Colonic mucosa (tissue), 4 donors: ENCODE measurements at regions of chr3 and their contacts with region 1.

Region 1: DNA sequence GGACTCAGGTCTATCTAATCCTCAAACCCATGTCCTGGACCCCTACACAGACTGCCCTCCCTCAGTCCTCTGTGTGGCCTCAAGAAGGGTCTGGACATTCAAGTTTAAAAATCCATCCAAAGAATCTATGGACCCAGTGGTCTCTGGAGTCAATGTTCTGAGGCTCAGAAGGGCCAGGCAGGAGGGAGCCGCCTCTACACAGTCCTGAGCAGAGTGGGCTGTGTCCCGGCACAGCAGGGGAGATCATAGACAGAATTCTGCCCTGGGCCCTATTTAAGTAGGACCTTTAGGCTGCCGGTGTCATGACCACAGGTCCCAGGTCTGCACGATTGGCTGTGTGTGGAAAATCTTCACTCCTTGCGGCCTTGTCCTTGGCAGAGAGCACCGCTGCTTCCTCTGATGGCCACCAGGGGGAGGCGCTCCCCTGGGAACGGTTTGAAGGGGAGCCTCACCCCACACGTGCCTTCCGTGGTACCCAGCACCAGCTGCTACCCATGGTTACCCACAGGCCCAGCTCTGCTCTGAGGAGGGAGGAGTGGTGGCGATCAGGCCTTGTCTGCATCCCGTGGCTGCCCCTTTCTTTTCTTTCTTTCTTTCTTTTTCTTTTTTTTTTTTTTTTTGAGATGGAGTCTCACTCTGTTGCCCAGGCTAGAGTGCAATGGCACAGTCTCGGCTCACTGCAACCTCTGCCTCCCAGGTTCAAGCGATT is 37.9 kb downstream of the CHRD start:
- DNase-seq: peak; percentile 79
- H3K4me3 ChIP-seq: no peak overlapping the region
- H3K27ac ChIP-seq: no peak overlapping the region
- H3K4me1 ChIP-seq: no peaks in the 10 kb centered on the region
- H3K27me3 ChIP-seq: no peaks in the 10 kb centered on the region
- CTCF ChIP-seq: peak; percentile 89

Region 2: GRCh38 chr3:183812761-183813445 is 604.9 kb before region 1 on chr3:
- intact Hi-C with region 1: no loop called
- DNase-seq: no peak
- H3K4me3 ChIP-seq: no peak overlapping the region
- H3K27ac ChIP-seq: no peak overlapping the region
- H3K4me1 ChIP-seq: no peaks in the 10 kb centered on the region
- H3K27me3 ChIP-seq: no peaks in the 10 kb centered on the region
- CTCF ChIP-seq: no peak

Region 3: GRCh38 chr3:184469423-184469822 is 51.6 kb after region 1 on chr3:
- intact Hi-C with region 1: loop called (anchors 5 kb)
- DNase-seq: peak; percentile 59
- H3K4me3 ChIP-seq: no peak overlapping the region
- H3K27ac ChIP-seq: no peak overlapping the region
- H3K4me1 ChIP-seq: no peaks in the 10 kb centered on the region
- H3K27me3 ChIP-seq: no peaks in the 10 kb centered on the region
- CTCF ChIP-seq: peak; percentile 45

Region 4: GRCh38 chr3:184513276-184514170 is 95.8 kb after region 1 on chr3:
- intact Hi-C with region 1: loop called (anchors 5 kb)
- DNase-seq: peak; percentile 89
- H3K4me3 ChIP-seq: peak overlapping the region; percentile 38
- H3K27ac ChIP-seq: no peak overlapping the region
- H3K4me1 ChIP-seq: no peaks in the 10 kb centered on the region
- H3K27me3 ChIP-seq: peaks cover 3% of the 10 kb centered on the region
- CTCF ChIP-seq: peak; percentile 72

Region 5: GRCh38 chr3:184543843-184544512 is 126.2 kb after region 1 on chr3:
- intact Hi-C with region 1: loop called (anchors 10 kb)
- DNase-seq: peak; percentile 88
- H3K4me3 ChIP-seq: no peak overlapping the region
- H3K27ac ChIP-seq: no peak overlapping the region
- H3K4me1 ChIP-seq: no peaks in the 10 kb centered on the region
- H3K27me3 ChIP-seq: no peaks in the 10 kb centered on the region
- CTCF ChIP-seq: peak; percentile 89

Region 6: GRCh38 chr3:185342458-185343174 is 924.8 kb after region 1 on chr3:
- intact Hi-C with region 1: no loop called
- DNase-seq: no peak
- H3K4me3 ChIP-seq: no peak overlapping the region
- H3K27ac ChIP-seq: no peak overlapping the region
- H3K4me1 ChIP-seq: no peaks in the 10 kb centered on the region
- H3K27me3 ChIP-seq: no peaks in the 10 kb centered on the region
- CTCF ChIP-seq: no peak